ENCODE measurements at regions of chr3 and their contacts with region 1.

Region 1: GRCh38 chr3:102006812-102007485 is 157.6 kb downstream of the NFKBIZ start:
- DNase-seq: no peak
- ATAC-seq: no peak
- H3K4me3 ChIP-seq: no peak overlapping the region
- H3K4me3 Mint-ChIP-seq: no peak overlapping the region
- H3K27ac ChIP-seq: no peak overlapping the region
- H3K27ac Mint-ChIP-seq: no peak overlapping the region
- H3K4me1 ChIP-seq: no peaks in the 10 kb centered on the region
- H3K4me1 Mint-ChIP-seq: peaks cover 0 to 3% (median under 1%) of the 10 kb centered on the region in 3 donors
- H3K27me3 ChIP-seq: no peaks in the 10 kb centered on the region
- H3K27me3 Mint-ChIP-seq: no peaks in the 10 kb centered on the region

Region 2: DNA sequence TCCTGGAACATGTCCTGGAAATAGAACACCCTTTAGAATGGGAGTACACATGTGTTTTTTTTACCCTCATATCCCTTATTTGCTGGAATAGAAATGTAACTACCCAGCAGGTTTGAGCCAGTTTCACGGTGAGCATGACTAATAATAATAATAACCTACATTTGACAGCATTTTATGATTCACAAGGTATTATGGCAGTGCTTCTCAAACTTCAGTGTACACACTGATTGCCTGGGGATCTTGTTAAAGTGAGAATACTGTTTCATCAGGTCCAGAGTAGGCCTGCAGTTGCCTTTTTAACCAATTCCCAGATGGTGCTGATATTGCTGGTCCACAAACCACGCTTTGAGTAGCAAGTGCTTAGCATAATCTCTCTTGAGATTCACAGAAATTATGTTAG is 93.8 kb before region 1 on chr3:
- CTCF ChIA-PET with region 1: no interaction called
- POLR2A ChIA-PET with region 1: interaction called in 1 of 2 experiments, 10 read pairs
- DNase-seq: no peak
- ATAC-seq: no peak
- H3K4me3 ChIP-seq: no peak overlapping the region
- H3K4me3 Mint-ChIP-seq: no peak overlapping the region
- H3K27ac ChIP-seq: no peak overlapping the region
- H3K27ac Mint-ChIP-seq: no peak overlapping the region
- H3K4me1 ChIP-seq: no peaks in the 10 kb centered on the region
- H3K4me1 Mint-ChIP-seq: peaks cover 0 to 1% (median 0%) of the 10 kb centered on the region in 3 donors
- H3K27me3 ChIP-seq: peaks cover 0 to 3% of the 10 kb centered on the region in 2 experiments
- H3K27me3 Mint-ChIP-seq: no peaks in the 10 kb centered on the region

Region 3: DNA sequence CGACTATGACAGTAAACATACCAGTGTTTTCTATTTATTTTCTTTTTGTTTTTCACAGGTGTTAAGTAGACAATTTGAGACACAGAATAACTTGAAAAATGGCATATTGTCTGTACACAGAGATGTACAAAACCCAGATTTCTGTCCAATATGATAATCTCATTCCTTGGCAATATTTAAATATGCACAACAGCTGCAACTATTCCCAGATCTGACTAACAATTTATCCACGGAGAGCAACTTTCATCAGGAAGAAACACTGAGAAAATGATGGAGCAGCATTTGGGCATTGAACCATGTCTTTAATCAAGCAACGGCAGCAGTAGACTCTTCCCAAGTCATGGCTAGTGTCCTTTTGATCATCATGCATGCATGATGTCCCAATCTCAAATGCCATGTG is 880.5 kb after region 1 on chr3:
- CTCF ChIA-PET with region 1: no interaction called
- POLR2A ChIA-PET with region 1: no interaction called
- DNase-seq: no peak
- ATAC-seq: no peak
- H3K4me3 ChIP-seq: no peak overlapping the region
- H3K4me3 Mint-ChIP-seq: no peak overlapping the region
- H3K27ac ChIP-seq: no peak overlapping the region
- H3K27ac Mint-ChIP-seq: no peak overlapping the region
- H3K4me1 ChIP-seq: no peaks in the 10 kb centered on the region
- H3K4me1 Mint-ChIP-seq: no peaks in the 10 kb centered on the region
- H3K27me3 ChIP-seq: no peaks in the 10 kb centered on the region
- H3K27me3 Mint-ChIP-seq: no peaks in the 10 kb centered on the region